PC-9 (cell line): ENCODE measurements at regions of chr1 and their contacts with region 1.

Region 1: DNA sequence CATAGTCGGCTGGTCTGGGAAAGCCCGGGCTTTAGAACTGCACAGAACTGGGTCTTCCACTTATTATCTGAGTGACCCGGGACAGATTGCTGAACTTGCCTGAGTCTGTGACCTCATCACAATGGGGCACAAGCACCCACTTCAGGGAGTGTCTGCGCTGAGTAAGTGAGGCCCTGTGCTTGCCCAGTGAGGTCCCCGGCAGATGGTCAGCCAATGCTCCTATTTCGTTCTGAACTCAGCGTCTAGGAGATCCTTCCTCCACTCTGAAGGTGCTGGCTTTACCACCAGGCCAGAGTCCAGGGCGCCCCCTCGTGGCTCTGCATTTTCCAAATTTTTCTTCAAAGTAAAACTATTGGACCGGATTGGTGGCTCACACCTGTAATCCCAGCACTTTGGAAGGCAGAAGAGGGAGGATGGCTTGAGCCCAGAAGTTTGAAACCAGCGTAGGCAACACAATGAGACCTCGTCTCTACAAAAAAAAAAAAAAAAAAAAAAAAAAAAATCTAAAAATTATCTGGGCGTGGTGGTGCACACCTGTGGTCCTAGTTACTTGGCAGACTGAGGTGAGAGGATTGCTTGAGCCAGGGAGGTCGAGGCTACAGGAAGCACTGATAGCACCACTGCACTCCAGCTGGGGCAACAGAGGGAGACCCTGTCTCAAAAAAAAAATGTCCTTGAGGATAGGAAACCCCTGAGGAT is 61.7 kb downstream of the FCRL5 start:
- DNase-seq: peak in 1 of 2 experiments; percentile 58
- H3K4me3 ChIP-seq: no peak overlapping the region
- H3K27ac ChIP-seq: no peak overlapping the region
- H3K4me1 ChIP-seq: no peaks in the 10 kb centered on the region
- H3K27me3 ChIP-seq: peaks cover 7% of the 10 kb centered on the region; the same call in 1 of the 2 replicates
- CTCF ChIP-seq: peak; percentile 72

Region 2: GRCh38 chr1:157090196-157090647 is 400.4 kb before region 1 on chr1:
- CTCF ChIA-PET with region 1: interaction called, 3 read pairs
- POLR2A ChIA-PET with region 1: no interaction called
- intact Hi-C with region 1: loop called (anchors 1 kb)
- DNase-seq: peak; percentile 62 to 76
- H3K4me3 ChIP-seq: no peak overlapping the region
- H3K27ac ChIP-seq: no peak overlapping the region
- H3K4me1 ChIP-seq: peaks cover 21% of the 10 kb centered on the region
- H3K27me3 ChIP-seq: no peaks in the 10 kb centered on the region
- CTCF ChIP-seq: peak; percentile 95

Region 3: GRCh38 chr1:157170677-157171515 is 319.7 kb before region 1 on chr1:
- CTCF ChIA-PET with region 1: no interaction called
- POLR2A ChIA-PET with region 1: no interaction called
- intact Hi-C with region 1: loop called (anchors 2 kb)
- DNase-seq: peak; percentile 34 to 41
- H3K4me3 ChIP-seq: no peak overlapping the region
- H3K27ac ChIP-seq: no peak overlapping the region
- H3K4me1 ChIP-seq: no peaks in the 10 kb centered on the region
- H3K27me3 ChIP-seq: peaks cover 61% of the 10 kb centered on the region
- CTCF ChIP-seq: peak; percentile 74

Region 4: DNA sequence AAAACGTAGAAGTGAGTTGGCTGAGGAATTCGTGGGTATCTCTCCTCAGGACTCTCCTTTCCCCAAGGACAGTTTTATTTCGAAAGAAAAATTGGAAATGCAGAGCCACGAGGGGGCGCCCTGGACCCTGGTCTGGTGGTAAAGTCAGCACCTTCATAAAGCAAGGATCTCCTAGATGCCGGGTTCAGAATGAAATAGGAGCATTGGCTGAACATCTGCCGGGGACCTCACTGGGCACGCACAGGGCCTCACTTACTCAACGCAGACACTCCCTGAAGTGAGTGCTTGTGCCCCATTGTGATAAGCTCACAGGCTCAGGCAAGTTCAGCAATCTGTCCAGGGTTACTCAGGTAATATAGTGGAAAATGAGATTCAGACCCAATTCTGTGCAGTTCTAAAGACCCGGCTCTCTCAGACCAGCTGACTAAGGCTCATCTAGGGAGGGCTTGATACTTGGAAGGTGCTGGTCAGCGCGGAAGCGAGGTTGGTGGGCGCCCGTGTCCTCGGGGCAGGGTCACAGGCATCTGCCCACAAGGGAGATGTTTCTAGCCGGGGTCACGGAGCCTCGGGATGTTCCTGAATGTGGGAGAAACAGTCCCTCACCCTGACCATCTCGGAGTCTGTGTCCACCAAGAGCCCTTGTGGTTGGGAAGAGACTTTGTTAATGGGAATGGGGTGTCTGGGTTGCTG is 296.8 kb before region 1 on chr1:
- CTCF ChIA-PET with region 1: no interaction called
- POLR2A ChIA-PET with region 1: no interaction called
- intact Hi-C with region 1: loop called (anchors 1 kb)
- DNase-seq: peak in 1 of 2 experiments; percentile 56
- H3K4me3 ChIP-seq: no peak overlapping the region
- H3K27ac ChIP-seq: no peak overlapping the region
- H3K4me1 ChIP-seq: no peaks in the 10 kb centered on the region
- H3K27me3 ChIP-seq: peaks cover 68% of the 10 kb centered on the region
- CTCF ChIP-seq: peak; percentile 79

Region 5: DNA sequence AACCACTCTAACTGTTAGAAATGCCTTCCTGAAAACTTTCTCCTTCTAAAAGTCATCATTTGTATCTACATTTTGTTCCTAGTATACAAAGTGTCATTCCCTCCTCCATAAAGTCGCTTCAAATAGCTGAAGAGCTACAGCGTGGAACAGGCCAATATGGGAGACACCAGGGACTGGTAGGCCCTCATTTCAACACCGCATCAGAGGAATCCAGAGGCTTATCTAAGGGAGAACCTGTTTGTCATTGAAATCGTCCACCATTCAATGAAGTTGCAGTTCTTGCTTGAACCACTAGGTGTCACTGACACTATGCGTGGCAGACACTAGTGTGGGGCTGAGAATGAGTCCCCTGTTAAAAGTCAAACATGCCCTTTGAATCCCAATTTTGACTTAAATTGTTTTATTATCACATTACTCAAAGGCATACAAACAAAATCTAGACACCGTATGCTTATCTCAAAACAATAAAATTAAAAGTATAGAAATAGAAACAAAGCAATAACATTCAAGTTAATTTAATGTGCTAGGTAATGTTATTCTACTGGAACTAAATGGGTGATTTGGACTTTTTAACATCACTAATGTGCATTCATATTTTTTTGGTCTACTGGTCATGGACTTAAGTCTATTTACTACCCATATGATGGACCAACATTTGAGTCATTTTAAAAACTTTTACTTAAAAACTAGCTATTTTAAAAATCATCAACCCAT is 120.7 kb before region 1 on chr1:
- CTCF ChIA-PET with region 1: no interaction called
- POLR2A ChIA-PET with region 1: no interaction called
- intact Hi-C with region 1: loop called (anchors 1 kb)
- DNase-seq: peak; percentile 20 to 46
- H3K4me3 ChIP-seq: no peak overlapping the region
- H3K27ac ChIP-seq: no peak overlapping the region
- H3K4me1 ChIP-seq: no peaks in the 10 kb centered on the region
- H3K27me3 ChIP-seq: peaks cover 9% of the 10 kb centered on the region
- CTCF ChIP-seq: peak; percentile 93

Region 6: DNA sequence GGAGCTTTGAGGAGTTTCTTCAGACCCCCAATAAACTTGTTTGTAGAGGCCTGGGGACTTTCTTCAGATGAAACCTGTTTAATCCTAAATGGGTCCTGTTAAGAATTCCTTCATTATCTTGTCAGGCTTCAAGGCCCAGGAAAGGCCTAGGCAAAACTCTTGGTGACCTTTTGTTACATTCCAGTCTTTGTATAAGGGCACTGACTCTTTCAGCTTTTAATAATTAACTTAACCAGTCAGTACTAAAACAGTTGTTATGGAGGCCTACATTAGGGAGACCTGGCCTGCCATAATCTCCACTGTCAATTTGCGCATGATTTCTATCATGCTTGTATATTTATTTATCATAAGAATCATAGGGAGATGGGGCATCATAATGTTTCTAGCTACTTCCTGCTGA is 48.6 kb before region 1 on chr1:
- CTCF ChIA-PET with region 1: no interaction called
- POLR2A ChIA-PET with region 1: no interaction called
- intact Hi-C with region 1: no loop called
- DNase-seq: no peak
- H3K4me3 ChIP-seq: no peak overlapping the region
- H3K27ac ChIP-seq: no peak overlapping the region
- H3K4me1 ChIP-seq: no peaks in the 10 kb centered on the region
- H3K27me3 ChIP-seq: no peaks in the 10 kb centered on the region
- CTCF ChIP-seq: no peak

Region 7: GRCh38 chr1:157595356-157595755 is 104.7 kb after region 1 on chr1:
- CTCF ChIA-PET with region 1: no interaction called
- POLR2A ChIA-PET with region 1: no interaction called
- intact Hi-C with region 1: no loop called
- DNase-seq: no peak
- H3K4me3 ChIP-seq: no peak overlapping the region
- H3K27ac ChIP-seq: no peak overlapping the region
- H3K4me1 ChIP-seq: no peaks in the 10 kb centered on the region
- H3K27me3 ChIP-seq: no peaks in the 10 kb centered on the region
- CTCF ChIP-seq: no peak